ENCODE measurements at regions of chr10 and their contacts with region 1.

Region 1: GRCh38 chr10:86899670-86900276 is 57.6 kb downstream of the MMRN2 start:
- DNase-seq: no peak
- H3K4me3 ChIP-seq: no peak overlapping the region
- H3K27ac ChIP-seq: peak overlapping the region; percentile 50
- H3K4me1 ChIP-seq: peaks cover 9% of the 10 kb centered on the region
- H3K27me3 ChIP-seq: no peaks in the 10 kb centered on the region
- CTCF ChIP-seq: peak; percentile 42 to 74 (median 45)
- POLR2A ChIP-seq: no peak

Region 2: DNA sequence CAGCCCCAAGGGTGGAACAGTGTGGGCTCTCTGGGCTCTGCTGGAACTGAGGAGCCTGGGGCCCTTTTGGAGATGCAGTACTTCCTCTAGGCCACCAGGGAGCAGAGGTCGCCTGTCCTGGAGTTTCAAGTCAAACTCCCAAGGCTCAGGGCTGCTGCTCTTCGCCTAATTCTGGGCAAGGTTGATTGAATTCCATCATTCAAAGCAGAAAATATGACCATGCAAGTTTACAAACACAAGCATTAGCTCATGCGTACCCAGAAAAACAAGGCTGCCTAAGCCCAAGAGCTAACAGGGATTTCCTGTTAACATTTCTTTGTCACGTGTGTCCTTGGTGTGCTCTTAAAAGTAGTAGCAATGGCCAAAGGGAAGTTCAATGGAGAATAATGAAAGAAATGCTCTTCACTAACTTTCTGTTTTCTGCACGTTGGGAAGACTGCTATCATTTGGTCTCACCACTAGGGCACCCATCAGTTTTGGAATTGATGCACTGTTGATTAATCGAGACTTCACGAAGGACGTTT is 211.3 kb before region 1 on chr10:
- intact Hi-C with region 1: loop called (anchors 5 kb)
- DNase-seq: no peak
- H3K4me3 ChIP-seq: no peak overlapping the region
- H3K27ac ChIP-seq: no peak overlapping the region
- H3K4me1 ChIP-seq: peaks cover 6% of the 10 kb centered on the region
- H3K27me3 ChIP-seq: no peaks in the 10 kb centered on the region
- CTCF ChIP-seq: peak; percentile 47 to 76 (median 56)
- POLR2A ChIP-seq: no peak

Region 3: DNA sequence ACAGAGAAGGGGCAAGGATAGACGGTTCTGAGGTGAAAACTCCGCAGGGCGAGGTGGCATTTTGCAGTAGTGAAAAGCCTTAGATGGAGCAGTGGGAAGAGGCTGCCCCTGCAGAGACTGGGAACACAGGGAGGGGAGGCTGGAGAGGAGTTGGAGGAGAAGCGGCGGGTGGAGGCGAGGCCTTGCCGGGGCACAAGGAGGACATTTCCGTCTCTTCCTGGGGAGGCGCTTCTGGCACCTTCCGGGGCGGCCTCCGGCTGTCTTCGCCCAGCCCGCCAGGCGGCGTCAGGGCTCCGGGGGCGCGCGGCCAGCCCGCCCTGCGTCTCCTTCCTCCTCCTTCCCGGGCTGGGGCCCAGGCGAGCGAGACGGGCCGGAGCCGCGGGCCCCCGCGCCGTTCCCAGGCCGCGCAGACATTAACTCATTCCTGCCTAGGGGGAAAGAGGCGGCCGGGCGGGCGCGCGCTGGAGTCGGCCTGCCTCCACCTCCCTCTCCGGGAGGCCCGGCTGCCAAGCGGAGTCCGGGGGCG is 188.7 kb before region 1 on chr10:
- intact Hi-C with region 1: loop called (anchors 5 kb)
- DNase-seq: no peak
- H3K4me3 ChIP-seq: peak overlapping the region; percentile 72 to 76
- H3K27ac ChIP-seq: peak overlapping the region; percentile 96
- H3K4me1 ChIP-seq: peaks cover 15% of the 10 kb centered on the region
- H3K27me3 ChIP-seq: no peaks in the 10 kb centered on the region
- CTCF ChIP-seq: peak; percentile 57 to 90 (median 76)
- POLR2A ChIP-seq: peak in 1 of 2 donors; percentile 58

Measured in vagina (tissue), 2 donors.